T-cell (primary cell): ENCODE measurements at regions of chr4 and their contacts with region 1.

Region 1: DNA sequence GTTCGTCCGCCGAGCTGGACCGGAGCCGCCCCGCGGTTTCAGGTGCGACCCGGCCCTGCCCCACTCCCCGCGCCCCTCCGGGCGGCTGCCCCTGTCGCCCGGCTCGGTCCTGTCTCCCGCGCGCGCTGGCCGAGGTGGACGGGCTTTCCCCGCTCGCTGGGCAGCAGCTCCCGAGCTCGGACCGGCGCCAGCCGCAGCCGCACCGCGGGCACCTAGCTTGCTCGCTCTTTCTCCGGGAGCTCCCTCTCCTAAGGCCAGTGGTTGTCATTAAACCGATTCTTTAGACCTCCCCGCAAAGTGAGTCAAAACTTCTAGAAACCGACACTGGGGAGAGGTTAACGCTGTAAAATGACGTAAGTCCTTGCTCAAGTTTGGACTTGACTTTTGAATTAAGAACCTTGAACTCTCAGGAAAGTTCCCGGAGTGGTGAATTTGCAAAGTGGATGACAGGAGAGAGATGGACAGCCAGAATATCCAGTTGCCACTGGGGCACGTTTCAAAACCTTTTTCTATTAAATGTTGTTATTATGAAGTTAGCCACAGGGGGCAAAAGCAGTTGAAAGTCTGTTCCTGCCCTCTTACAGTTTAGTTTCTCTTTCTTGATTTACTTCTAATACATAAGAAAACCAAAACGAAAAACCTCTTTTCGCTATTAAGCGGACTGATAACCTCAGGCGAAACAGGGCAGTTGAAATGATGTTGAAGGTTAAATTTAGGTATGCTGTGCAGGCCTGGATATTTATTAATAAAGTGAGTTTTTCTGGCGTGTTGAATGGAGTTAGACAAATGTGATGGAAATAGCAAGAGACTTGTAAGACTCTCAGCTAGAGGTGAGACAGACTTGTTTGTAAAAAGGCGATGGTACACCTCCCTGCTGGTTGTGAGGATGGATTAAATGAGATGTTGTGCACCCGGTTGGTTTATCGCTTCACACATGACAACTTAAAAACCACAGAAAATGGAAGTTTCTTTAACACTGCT is 847 bp downstream of the PI4K2B start:
- DNase-seq: peak in 31 of 35 experiments; percentile 6 to 81 (median 21)
- ATAC-seq: peak; percentile 39 to 49 (median 42)
- H3K4me3 ChIP-seq: peak overlapping the region; percentile 91 to 93
- H3K4me3 Mint-ChIP-seq: peak overlapping the region; percentile 85 to 95 (median 90)
- H3K27ac ChIP-seq: peak overlapping the region; percentile 88
- H3K27ac Mint-ChIP-seq: peak overlapping the region; percentile 94 to 98
- H3K4me1 ChIP-seq: peaks cover 11 to 26% of the 10 kb centered on the region in 2 experiments
- H3K4me1 Mint-ChIP-seq: peaks cover 44 to 52% (median 46%) of the 10 kb centered on the region in 3 donors
- H3K27me3 ChIP-seq: no peaks in the 10 kb centered on the region
- H3K27me3 Mint-ChIP-seq: no peaks in the 10 kb centered on the region

Region 2: DNA sequence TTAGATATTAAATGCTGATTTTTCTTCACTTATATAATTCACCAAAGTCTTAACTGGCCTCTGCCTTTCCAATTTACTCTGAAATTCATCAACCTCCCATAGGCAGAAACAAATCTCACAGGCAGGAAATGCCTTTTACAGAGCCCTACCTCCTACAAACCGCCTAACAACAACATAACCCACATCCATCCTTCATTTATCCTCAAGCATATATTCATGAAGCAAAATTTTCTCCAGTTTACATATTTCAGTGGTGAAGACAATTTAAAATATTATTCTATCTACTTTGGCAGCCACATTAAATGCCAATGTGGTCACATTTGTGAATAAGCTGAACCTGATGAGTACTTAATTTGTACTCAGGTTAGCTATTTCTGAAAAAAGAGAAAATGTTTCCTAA is 104.8 kb before region 1 on chr4:
- CTCF ChIA-PET with region 1: no interaction called
- POLR2A ChIA-PET with region 1: no interaction called
- DNase-seq: no peak
- ATAC-seq: no peak
- H3K4me3 ChIP-seq: no peak overlapping the region
- H3K4me3 Mint-ChIP-seq: no peak overlapping the region
- H3K27ac ChIP-seq: no peak overlapping the region
- H3K27ac Mint-ChIP-seq: no peak overlapping the region
- H3K4me1 ChIP-seq: peaks cover 0 to 2% of the 10 kb centered on the region in 2 experiments
- H3K4me1 Mint-ChIP-seq: peaks cover 0 to 6% (median 0%) of the 10 kb centered on the region in 3 donors
- H3K27me3 ChIP-seq: no peaks in the 10 kb centered on the region
- H3K27me3 Mint-ChIP-seq: no peaks in the 10 kb centered on the region

Region 3: DNA sequence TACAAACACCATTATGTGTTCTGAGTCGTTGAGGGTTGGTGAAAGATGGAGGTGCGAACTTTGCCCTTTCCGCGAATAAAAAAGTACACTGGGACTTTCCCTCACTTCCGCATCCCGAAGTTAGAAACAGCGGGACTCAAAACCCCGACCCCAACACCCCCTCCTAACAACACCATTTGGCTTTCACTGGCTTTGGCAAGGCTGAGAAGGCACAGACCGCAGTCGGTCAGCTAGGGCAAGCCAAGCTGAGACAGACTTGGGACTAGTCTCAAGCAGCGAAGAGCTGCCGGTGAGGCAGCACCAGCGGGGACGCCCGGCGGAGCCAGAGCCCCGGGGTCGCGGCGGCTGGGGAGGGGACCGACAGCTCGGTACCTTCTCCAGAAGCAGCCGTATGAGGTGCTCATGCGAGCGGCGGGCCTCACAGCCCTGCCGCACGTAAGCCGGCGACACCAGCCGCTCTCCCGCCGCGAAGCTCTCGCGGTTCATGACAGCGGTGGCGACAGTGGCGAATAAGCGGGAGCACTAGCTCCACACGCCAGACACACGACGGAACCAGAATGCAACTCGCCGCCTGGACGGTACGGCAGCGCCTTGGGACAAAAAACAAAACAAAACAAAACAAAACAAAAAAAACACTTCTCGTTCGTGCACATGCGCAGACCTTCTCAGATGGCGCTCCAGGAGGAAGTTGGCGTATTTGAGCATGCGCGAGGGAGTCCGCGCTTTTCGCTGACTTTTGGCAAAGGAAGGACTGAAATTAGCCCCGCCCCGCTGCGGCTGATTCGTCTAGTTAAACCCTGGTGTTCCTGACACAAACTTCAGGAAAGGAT is 74.6 kb before region 1 on chr4 and contains the start of gene SEPSECS:
- CTCF ChIA-PET with region 1: interaction called, 3 to 24 read pairs
- POLR2A ChIA-PET with region 1: interaction called in 1 of 2 experiments, 6 read pairs
- DNase-seq: peak; percentile 78 to 98 (median 91)
- ATAC-seq: peak; percentile 80 to 86 (median 81)
- H3K4me3 ChIP-seq: peak within 1 kb of the TSS; percentile 91 to 95
- H3K4me3 Mint-ChIP-seq: peak within 1 kb of the TSS; percentile 88 to 93 (median 93)
- H3K27ac ChIP-seq: peak within 1 kb of the TSS; percentile 98
- H3K27ac Mint-ChIP-seq: peak within 1 kb of the TSS; percentile 97 to 98
- H3K4me1 ChIP-seq: peaks cover 13 to 24% of the 10 kb centered on the region in 2 experiments
- H3K4me1 Mint-ChIP-seq: peaks cover 49 to 66% (median 60%) of the 10 kb centered on the region in 3 donors
- H3K27me3 ChIP-seq: no peaks in the 10 kb centered on the region
- H3K27me3 Mint-ChIP-seq: no peaks in the 10 kb centered on the region
- total RNA-seq, gene SEPSECS: 12.4 to 16.2 (median 15.0) TPM